Activated CD8-positive, alpha-beta T cell treated with anti-CD3 and anti-CD28 coated beads for 36 hours (primary cell): ENCODE measurements at regions of chr20 and their contacts with region 1.

Region 1: GRCh38 chr20:19628570-19629169 is 129.4 kb upstream of the RIN2 start:
- DNase-seq: peak; percentile 69
- ATAC-seq: peak; percentile 37
- H3K4me3 Mint-ChIP-seq: no peak overlapping the region
- H3K27ac Mint-ChIP-seq: peak overlapping the region; percentile 7
- H3K4me1 Mint-ChIP-seq: no peaks in the 10 kb centered on the region
- H3K27me3 Mint-ChIP-seq: peaks cover 11% of the 10 kb centered on the region
- CTCF ChIP-seq: peak; percentile 72

Region 2: GRCh38 chr20:19589787-19590362 is 38.8 kb before region 1 on chr20:
- CTCF ChIA-PET with region 1: no interaction called
- POLR2A ChIA-PET with region 1: no interaction called
- intact Hi-C with region 1: no loop called
- DNase-seq: no peak
- ATAC-seq: no peak
- H3K4me3 Mint-ChIP-seq: no peak overlapping the region
- H3K27ac Mint-ChIP-seq: no peak overlapping the region
- H3K4me1 Mint-ChIP-seq: no peaks in the 10 kb centered on the region
- H3K27me3 Mint-ChIP-seq: no peaks in the 10 kb centered on the region
- CTCF ChIP-seq: no peak

Region 3: GRCh38 chr20:19617256-19617655 is 11.4 kb before region 1 on chr20:
- CTCF ChIA-PET with region 1: interaction called, 10 read pairs
- POLR2A ChIA-PET with region 1: no interaction called
- intact Hi-C with region 1: no loop called
- DNase-seq: no peak
- ATAC-seq: no peak
- H3K4me3 Mint-ChIP-seq: no peak overlapping the region
- H3K27ac Mint-ChIP-seq: no peak overlapping the region
- H3K4me1 Mint-ChIP-seq: no peaks in the 10 kb centered on the region
- H3K27me3 Mint-ChIP-seq: peaks cover 2% of the 10 kb centered on the region
- CTCF ChIP-seq: no peak

Region 4: DNA sequence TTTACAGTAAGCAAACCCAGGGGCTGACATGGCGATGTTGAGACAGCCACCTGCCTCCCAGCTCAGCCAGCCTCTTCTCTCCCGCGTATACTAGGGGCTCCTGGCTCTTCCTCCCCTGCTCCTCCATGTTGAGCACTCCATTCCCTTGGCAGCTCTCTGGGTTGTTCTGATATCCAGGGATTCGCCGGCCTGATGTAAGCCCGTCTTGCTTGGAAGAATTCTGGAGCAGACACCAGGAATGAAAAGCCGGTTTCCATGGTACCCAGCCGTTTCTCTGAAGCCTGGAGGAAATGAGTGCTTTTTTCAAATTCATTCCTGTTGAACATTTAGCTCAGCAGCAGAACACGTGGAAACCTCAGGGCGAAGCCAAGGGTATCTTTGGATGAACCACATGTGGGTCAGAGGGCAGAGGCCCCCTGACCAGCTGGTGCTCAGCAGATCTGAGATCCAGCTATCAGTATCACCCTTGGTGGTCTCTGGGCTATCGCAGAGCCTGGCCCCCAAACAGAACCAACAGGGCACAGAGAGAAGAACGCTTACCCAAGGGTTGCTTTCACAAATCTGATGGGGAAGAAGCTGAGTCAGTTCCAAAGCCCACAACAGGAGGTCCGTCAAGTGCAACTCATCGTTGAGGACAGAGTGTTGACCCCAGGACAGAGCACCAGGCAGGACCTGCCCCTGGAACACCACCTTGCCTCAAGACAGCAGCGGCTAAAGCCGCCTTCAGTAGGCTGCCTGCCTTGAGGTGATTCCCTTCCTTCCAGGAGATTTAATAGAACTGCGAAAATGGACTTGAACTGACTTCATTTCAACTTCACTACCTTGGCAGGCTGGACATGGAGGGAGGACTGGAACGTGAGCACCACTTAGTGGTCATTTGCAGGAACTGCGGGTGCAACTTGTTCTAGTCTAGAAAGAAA is 33.3 kb after region 1 on chr20:
- CTCF ChIA-PET with region 1: interaction called, 22 read pairs
- POLR2A ChIA-PET with region 1: no interaction called
- intact Hi-C with region 1: no loop called
- DNase-seq: peak; percentile 57
- ATAC-seq: peak; percentile 64
- H3K4me3 Mint-ChIP-seq: no peak overlapping the region
- H3K27ac Mint-ChIP-seq: no peak overlapping the region
- H3K4me1 Mint-ChIP-seq: no peaks in the 10 kb centered on the region
- H3K27me3 Mint-ChIP-seq: peaks cover 23% of the 10 kb centered on the region
- CTCF ChIP-seq: peak; percentile 96

Region 5: GRCh38 chr20:19706463-19706862 is 77.8 kb after region 1 on chr20:
- CTCF ChIA-PET with region 1: no interaction called
- POLR2A ChIA-PET with region 1: no interaction called
- intact Hi-C with region 1: no loop called
- DNase-seq: no peak
- ATAC-seq: no peak
- H3K4me3 Mint-ChIP-seq: no peak overlapping the region
- H3K27ac Mint-ChIP-seq: no peak overlapping the region
- H3K4me1 Mint-ChIP-seq: no peaks in the 10 kb centered on the region
- H3K27me3 Mint-ChIP-seq: peaks cover 11% of the 10 kb centered on the region
- CTCF ChIP-seq: no peak